ENCODE measurements at regions of chr2 and their contacts with region 1.

Region 1: DNA sequence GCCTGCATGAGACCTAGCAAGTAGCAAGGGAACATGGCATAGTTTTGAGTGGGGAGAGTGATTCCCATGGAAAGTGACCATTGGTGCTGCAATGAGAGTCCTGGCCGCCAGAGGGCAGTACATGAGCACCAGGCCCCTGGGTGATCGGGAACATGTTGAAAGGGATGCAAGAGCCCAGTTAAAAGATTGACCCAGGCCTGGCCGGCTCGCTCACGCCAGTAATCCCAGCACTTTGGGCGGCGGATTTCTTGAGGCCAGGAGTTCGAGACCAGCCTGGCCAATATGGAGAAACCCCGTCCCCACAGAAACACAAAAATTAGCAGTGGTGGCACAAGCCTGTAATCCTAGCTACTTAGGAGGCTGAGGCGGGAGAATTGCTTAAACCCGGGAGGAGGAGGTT is 22.2 kb downstream of the FAP start:
- DNase-seq: peak; percentile 57 to 71 (median 69)
- H3K4me3 ChIP-seq: no peak overlapping the region
- H3K4me3 Mint-ChIP-seq: no peak overlapping the region
- H3K27ac ChIP-seq: no peak overlapping the region
- H3K27ac Mint-ChIP-seq: no peak overlapping the region
- H3K4me1 ChIP-seq: peaks cover 0 to 4% of the 10 kb centered on the region in 2 donors
- H3K4me1 Mint-ChIP-seq: peaks cover 9% of the 10 kb centered on the region
- H3K27me3 ChIP-seq: no peaks in the 10 kb centered on the region
- H3K27me3 Mint-ChIP-seq: no peaks in the 10 kb centered on the region
- CTCF ChIP-seq: peak; percentile 92

Region 2: DNA sequence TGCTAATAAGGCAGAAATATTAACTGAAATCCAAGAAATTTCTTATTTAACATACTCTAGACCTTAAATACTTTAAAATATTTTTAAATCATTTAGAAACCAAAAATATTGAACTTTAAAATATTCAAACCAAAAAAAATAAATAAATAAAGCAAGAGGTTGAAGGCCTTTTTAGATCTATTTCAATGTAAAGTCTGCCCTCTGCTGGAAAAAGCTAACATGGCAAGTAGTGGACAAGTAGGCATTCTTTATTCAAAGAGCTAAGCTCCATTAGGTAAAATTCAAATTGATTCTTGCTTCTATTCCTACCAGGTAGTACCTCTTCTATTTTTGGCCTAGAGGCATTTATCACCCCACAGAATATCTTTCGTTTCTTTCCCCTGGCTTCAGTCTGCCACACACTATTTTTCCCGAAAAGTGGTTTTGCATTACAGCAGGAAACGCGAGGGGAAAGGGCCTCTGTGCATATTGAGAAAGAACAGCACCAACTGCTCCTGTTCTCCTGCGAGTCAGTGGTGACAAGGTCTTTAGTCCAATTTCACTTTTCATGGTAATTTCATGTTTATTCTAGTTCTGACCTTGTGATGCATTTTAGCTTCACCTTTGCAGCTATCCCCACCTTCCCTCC is 77.0 kb after region 1 on chr2:
- intact Hi-C with region 1: loop called (anchors 2 kb)
- DNase-seq: peak; percentile 61 to 72 (median 68)
- H3K4me3 ChIP-seq: no peak overlapping the region
- H3K4me3 Mint-ChIP-seq: peak overlapping the region in 1 of 2 donors; percentile 17
- H3K27ac ChIP-seq: no peak overlapping the region
- H3K27ac Mint-ChIP-seq: peak overlapping the region in 1 of 7 donors; percentile 35
- H3K4me1 ChIP-seq: peaks cover 3 to 4% of the 10 kb centered on the region in 2 donors
- H3K4me1 Mint-ChIP-seq: peaks cover 13% of the 10 kb centered on the region
- H3K27me3 ChIP-seq: no peaks in the 10 kb centered on the region
- H3K27me3 Mint-ChIP-seq: no peaks in the 10 kb centered on the region
- CTCF ChIP-seq: peak; percentile 96

Measured in CD14-positive monocyte (primary cell).